Activated naive CD4-positive, alpha-beta T cell treated with anti-CD3 and anti-CD28 coated beads for 36 hours (primary cell): ENCODE measurements at regions of chr14 and their contacts with region 1.

Region 1: DNA sequence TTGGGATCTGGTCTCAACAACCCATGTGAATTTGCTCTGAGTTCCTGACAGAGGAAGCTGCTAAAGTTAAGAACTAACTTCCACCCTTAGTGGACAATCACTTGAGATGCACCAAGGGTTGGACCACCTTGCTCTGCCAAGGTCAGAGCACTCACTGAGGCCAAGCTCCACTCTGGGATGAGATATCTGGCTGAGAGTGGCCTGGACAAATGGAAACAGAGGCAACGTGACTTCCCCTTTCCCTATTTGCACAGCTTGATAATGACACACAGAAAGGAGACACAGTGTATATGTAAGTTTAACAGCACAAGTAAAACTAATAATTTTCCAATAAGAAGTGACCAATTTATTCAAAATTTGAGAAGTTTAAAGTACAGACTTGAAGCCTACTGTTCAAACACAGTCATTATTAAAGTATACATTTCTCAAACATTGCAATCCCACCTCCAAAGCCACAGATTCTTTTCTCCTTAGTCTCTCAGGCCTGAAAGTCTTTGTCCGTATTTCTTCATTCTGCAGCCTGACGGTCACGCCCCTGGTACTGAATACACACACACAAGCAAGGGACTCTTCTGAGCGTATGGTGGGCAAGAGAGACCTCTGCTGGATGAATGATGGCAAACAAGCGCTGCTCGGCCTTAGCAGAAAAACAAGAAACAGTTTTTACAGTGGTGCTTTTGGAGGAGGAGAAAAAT is 28.6 kb downstream of the TMEM30B start:
- DNase-seq: peak; percentile 83
- H3K4me3 Mint-ChIP-seq: no peak overlapping the region
- H3K27ac Mint-ChIP-seq: no peak overlapping the region
- H3K4me1 Mint-ChIP-seq: no peaks in the 10 kb centered on the region
- H3K27me3 Mint-ChIP-seq: peaks cover 7% of the 10 kb centered on the region

Region 2: GRCh38 chr14:60195179-60195810 is 1057.2 kb before region 1 on chr14:
- CTCF ChIA-PET with region 1: no interaction called
- intact Hi-C with region 1: loop called (anchors 10 kb)
- DNase-seq: no peak
- H3K4me3 Mint-ChIP-seq: no peak overlapping the region
- H3K27ac Mint-ChIP-seq: no peak overlapping the region
- H3K4me1 Mint-ChIP-seq: peaks cover 11% of the 10 kb centered on the region
- H3K27me3 Mint-ChIP-seq: peaks cover 10% of the 10 kb centered on the region

Region 3: DNA sequence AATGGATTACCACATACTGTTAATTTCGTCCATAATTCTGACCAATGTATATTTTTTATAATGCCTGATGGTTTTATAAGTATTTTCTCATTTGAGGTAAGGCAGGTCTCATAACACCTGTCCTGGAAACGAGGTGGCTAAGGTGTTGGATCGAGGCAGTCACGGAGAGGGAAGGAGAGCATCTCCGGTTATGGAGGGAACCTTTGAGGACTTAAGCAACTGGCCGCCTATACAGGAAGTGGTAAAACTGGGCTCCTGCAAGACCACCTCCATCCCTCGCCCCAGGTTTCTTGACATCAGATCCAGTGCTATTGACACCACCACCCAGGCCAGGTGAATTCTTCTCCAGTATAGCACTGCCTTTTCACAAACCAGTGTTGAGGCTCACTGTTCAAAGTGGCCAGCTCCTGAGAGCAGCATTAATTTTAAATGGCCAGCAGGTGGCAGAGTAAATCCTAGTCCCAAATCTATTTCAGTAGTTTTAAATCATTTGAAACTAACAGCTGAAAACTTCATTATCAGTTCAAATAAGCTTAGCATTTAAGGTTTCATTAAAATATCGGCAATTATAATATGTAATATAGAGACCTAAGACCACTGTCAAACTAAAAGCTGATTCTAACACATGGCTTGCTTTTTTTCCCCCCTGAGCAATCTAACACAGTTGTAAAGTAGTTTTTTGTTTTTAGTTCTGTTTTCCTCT is 902.7 kb before region 1 on chr14:
- CTCF ChIA-PET with region 1: interaction called, 4 read pairs
- intact Hi-C with region 1: loop called (anchors 1 kb)
- DNase-seq: peak; percentile 51
- H3K4me3 Mint-ChIP-seq: no peak overlapping the region
- H3K27ac Mint-ChIP-seq: no peak overlapping the region
- H3K4me1 Mint-ChIP-seq: no peaks in the 10 kb centered on the region
- H3K27me3 Mint-ChIP-seq: peaks cover 3% of the 10 kb centered on the region

Region 4: GRCh38 chr14:60622917-60623257 is 629.6 kb before region 1 on chr14:
- CTCF ChIA-PET with region 1: interaction called, 35 read pairs
- intact Hi-C with region 1: loop called (anchors 1 kb)
- DNase-seq: no peak
- H3K4me3 Mint-ChIP-seq: no peak overlapping the region
- H3K27ac Mint-ChIP-seq: no peak overlapping the region
- H3K4me1 Mint-ChIP-seq: no peaks in the 10 kb centered on the region
- H3K27me3 Mint-ChIP-seq: peaks cover 13% of the 10 kb centered on the region

Region 5: GRCh38 chr14:61034416-61035120 is 217.9 kb before region 1 on chr14:
- CTCF ChIA-PET with region 1: interaction called, 5 read pairs
- intact Hi-C with region 1: loop called (anchors 2 kb)
- DNase-seq: peak; percentile 40
- H3K4me3 Mint-ChIP-seq: no peak overlapping the region
- H3K27ac Mint-ChIP-seq: no peak overlapping the region
- H3K4me1 Mint-ChIP-seq: peaks cover 7% of the 10 kb centered on the region
- H3K27me3 Mint-ChIP-seq: no peaks in the 10 kb centered on the region